B cell (primary cell): ENCODE measurements at regions of chr20 and their contacts with region 1.

Region 1: DNA sequence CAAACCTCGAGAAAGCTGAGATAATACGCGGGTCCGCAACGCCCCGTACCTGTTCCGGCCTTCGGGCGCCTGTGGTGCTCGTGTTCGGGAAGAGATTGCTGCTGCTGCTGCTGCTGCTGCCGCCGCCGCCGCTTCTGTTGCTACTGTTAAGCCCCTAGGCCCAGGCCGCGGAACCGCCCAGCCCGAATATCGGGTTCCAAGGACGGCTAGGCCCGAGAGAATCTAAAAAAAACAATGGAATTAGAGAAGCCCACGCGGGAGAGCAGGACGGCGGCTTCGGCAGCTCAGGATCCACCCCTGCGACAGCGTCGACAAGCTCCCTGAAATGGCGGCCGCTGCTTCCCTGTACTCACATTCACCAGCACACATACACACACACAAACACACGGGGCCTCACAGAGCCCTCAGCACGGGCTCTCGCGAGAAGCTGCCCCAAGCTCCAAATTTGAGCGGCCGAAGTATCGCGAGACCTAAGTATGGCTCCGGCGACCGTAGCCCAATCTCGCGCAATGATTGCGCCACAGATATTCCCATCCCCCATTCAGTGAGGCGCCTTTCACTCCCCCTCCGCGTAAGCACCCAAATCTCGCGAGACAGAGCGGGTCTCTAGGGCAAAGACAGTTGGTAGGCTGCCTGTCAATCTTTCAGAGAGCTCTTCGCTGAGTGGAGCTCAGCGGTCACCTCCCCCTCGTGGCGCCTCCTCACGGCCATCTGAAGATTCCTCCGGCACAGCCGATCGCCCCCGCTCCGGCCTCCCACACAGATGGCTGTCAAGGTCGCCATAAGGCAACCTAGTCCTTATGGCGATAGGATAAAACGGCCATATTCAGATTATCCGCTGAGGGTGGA is at the start of gene RBM39:
- DNase-seq: peak; percentile 100
- ATAC-seq: peak; percentile 83
- H3K4me3 ChIP-seq: peak within 1 kb of the TSS; percentile 95 to 99 (median 99)
- H3K4me3 Mint-ChIP-seq: peak within 1 kb of the TSS; percentile 95
- H3K27ac ChIP-seq: peak within 1 kb of the TSS; percentile 100
- H3K27ac Mint-ChIP-seq: peak within 1 kb of the TSS; percentile 100
- H3K4me1 ChIP-seq: peaks cover 38 to 42% of the 10 kb centered on the region in 2 donors
- H3K4me1 Mint-ChIP-seq: peaks cover 46% of the 10 kb centered on the region
- H3K27me3 ChIP-seq: no peaks in the 10 kb centered on the region
- H3K27me3 Mint-ChIP-seq: no peaks in the 10 kb centered on the region
- CTCF ChIP-seq: peak; percentile 57
- total RNA-seq, gene RBM39: 689 and 698 TPM in 2 replicates

Region 2: DNA sequence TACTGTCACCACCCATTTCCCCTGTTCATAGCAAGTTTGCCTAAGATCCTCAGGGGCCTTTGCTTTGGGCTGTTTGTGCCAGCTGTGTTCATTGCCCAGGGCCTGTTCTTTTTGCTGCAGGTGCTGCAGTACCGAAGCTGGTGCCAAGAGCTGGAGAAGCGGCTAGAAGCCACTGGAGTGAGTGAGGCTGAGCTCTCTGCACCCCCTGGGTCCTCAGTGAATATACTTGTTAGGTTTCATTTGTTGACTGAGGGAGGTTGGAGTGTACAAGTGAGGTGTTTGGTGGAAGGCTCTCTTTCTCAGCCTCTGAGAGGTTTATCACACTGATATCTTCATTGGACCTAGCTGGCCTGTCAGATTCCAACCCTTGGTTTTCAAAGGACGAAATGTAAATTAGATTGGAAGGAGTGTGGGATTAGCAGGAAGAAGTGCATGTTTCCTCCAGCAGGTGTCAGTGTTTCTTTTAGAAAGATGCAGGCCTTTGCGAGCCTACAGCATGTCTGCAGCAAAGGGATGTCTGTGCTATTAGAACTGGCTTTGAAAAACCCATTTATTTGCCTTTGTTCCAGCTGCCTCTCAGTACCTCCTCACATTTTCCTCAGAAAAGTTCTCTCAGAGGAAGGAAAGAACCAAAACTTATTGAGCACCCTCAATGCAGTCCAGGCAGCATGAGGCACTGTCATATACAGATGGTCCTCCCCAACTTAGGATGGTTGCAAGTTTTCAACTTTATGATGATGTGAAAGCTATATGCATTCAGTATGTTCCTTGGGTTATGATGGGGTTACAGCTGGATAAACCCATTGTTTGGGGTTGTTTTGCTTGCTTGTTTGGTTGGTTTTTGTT is 278.4 kb before region 1 on chr20:
- CTCF ChIA-PET with region 1: no interaction called
- POLR2A ChIA-PET with region 1: no interaction called
- intact Hi-C with region 1: loop called (anchors 2 kb)
- DNase-seq: peak; percentile 80
- ATAC-seq: peak; percentile 77
- H3K4me3 ChIP-seq: no peak overlapping the region
- H3K4me3 Mint-ChIP-seq: no peak overlapping the region
- H3K27ac ChIP-seq: no peak overlapping the region
- H3K27ac Mint-ChIP-seq: peak overlapping the region; percentile 32
- H3K4me1 ChIP-seq: peaks cover 9 to 17% of the 10 kb centered on the region in 2 donors
- H3K4me1 Mint-ChIP-seq: peaks cover 15% of the 10 kb centered on the region
- H3K27me3 ChIP-seq: no peaks in the 10 kb centered on the region
- H3K27me3 Mint-ChIP-seq: no peaks in the 10 kb centered on the region
- CTCF ChIP-seq: peak; percentile 89

Region 3: DNA sequence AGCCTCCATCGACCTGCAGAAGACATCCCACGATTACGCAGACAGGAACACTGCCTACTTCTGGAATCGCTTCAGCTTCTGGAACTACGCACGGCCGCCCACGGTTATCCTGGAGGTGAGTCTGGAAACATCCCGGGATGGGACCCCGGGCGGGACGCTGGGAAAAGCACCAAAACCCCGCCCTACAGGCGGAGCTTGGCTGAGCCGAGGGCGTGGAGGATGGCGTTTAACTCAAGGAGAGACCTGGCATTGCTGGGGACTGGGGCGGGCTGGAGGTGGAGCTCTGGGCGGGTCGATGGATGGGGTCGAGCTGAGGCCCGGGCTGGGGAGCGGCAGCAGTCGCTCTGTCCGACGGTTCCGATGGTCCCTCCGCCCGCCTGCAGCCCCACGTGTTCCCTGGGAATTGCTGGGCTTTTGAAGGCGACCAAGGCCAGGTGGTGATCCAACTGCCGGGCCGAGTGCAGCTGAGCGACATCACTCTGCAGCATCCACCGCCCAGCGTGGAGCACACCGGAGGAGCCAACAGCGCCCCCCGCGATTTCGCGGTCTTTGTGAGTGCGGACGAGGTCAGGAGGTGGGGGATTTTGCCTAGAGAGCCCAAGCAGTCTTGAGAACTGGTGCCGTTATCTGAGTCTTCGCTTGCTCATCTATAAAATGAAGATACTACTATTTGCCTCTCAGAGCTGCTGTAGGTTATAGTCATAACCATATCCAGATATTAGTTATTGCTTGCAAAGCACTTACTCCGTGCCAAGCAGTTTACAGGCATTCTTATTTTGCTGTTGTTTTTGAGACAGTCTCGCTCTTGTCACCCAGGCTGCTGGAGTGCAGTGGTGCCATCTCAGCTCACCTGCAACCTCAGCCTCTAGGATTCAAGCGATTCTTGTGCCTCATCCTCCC is 122.7 kb before region 1 on chr20:
- CTCF ChIA-PET with region 1: interaction called, 4 read pairs
- POLR2A ChIA-PET with region 1: interaction called, 10 read pairs
- intact Hi-C with region 1: loop called (anchors 1 kb)
- DNase-seq: peak; percentile 90
- ATAC-seq: peak; percentile 18
- H3K4me3 ChIP-seq: peak overlapping the region; percentile 28 to 72 (median 55)
- H3K4me3 Mint-ChIP-seq: peak overlapping the region; percentile 95
- H3K27ac ChIP-seq: no peak overlapping the region
- H3K27ac Mint-ChIP-seq: peak overlapping the region; percentile 78
- H3K4me1 ChIP-seq: peaks cover 23 to 39% of the 10 kb centered on the region in 2 donors
- H3K4me1 Mint-ChIP-seq: peaks cover 36% of the 10 kb centered on the region
- H3K27me3 ChIP-seq: peaks cover 0 to 5% (median 2%) of the 10 kb centered on the region in 4 experiments
- H3K27me3 Mint-ChIP-seq: no peaks in the 10 kb centered on the region
- CTCF ChIP-seq: peak; percentile 84

Region 4: GRCh38 chr20:35699127-35699975 is 42.8 kb before region 1 on chr20 and contains the starts of genes NFS1 and ROMO1:
- CTCF ChIA-PET with region 1: interaction called, 10 read pairs
- POLR2A ChIA-PET with region 1: interaction called, 18 read pairs
- intact Hi-C with region 1: loop called (anchors 2 kb)
- DNase-seq: peak; percentile 92
- ATAC-seq: peak; percentile 88
- H3K4me3 ChIP-seq: peak within 1 kb of the TSS; percentile 69 to 98 (median 91)
- H3K4me3 Mint-ChIP-seq: peak within 1 kb of the TSS; percentile 85
- H3K27ac ChIP-seq: peak within 1 kb of the TSS; percentile 84 to 96
- H3K27ac Mint-ChIP-seq: peak within 1 kb of the TSS; percentile 97
- H3K4me1 ChIP-seq: peaks cover 17 to 23% of the 10 kb centered on the region in 2 donors
- H3K4me1 Mint-ChIP-seq: peaks cover 33% of the 10 kb centered on the region
- H3K27me3 ChIP-seq: no peaks in the 10 kb centered on the region
- H3K27me3 Mint-ChIP-seq: no peaks in the 10 kb centered on the region
- CTCF ChIP-seq: peak; percentile 31
- total RNA-seq, gene NFS1: 29.0 and 29.4 TPM in 2 replicates
- total RNA-seq, gene ROMO1: 33.2 and 38.1 TPM in 2 replicates

Region 5: DNA sequence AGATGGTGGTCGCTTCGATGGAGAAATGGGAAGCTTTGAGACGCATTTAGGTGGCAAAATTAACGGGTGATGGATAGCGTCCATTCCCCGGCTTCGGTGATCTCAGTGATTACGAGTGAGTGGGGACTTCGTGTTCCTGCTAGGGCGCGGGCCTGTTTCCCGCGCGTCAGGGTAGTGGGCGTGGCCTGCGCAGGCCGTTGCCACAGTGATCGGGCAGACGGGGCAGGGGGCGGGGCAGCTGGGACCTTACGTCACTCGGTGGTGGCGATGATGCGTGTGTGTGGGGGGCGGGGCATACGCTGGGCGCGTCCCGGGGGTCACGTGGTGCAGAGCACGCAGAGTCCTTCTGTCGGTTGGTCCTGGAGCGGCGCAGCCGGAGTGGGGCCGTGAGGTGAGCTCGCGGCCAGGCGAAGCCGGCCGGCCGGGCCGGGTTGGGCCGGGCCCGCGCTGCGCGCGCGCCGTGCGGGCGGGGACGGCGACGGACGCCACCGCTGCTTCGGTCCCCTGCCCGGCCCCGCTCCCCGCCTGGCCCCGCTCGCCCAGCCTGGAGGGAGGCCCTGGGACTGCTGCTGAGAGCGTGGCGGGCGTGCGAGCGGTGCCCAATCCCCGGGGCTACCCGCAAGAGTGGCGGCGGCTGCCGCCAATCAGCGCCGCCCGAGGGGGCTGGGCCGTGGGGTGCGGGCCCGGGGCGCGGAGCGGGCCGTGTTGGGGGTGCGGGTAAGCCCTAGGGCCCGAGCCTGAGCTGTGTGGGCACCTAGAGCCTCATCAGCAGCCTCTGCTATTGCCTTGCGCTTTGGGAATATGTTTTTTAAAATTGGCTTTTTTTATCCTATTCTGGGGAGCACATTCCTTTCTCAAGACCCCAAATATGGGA is 29.8 kb after region 1 on chr20 and contains the start of gene PHF20:
- CTCF ChIA-PET with region 1: interaction called, 82 read pairs
- POLR2A ChIA-PET with region 1: interaction called, 259 read pairs
- intact Hi-C with region 1: loop called (anchors 1 kb)
- DNase-seq: peak; percentile 100
- ATAC-seq: peak; percentile 80
- H3K4me3 ChIP-seq: peak within 1 kb of the TSS; percentile 67 to 98 (median 89)
- H3K4me3 Mint-ChIP-seq: peak within 1 kb of the TSS; percentile 88
- H3K27ac ChIP-seq: peak within 1 kb of the TSS; percentile 95 to 99
- H3K27ac Mint-ChIP-seq: peak within 1 kb of the TSS; percentile 99
- H3K4me1 ChIP-seq: peaks cover 80 to 88% of the 10 kb centered on the region in 2 donors
- H3K4me1 Mint-ChIP-seq: peaks cover 72% of the 10 kb centered on the region
- H3K27me3 ChIP-seq: no peaks in the 10 kb centered on the region
- H3K27me3 Mint-ChIP-seq: no peaks in the 10 kb centered on the region
- CTCF ChIP-seq: no peak
- total RNA-seq, gene PHF20: 92.3 and 101 TPM in 2 replicates